ENCODE measurements at regions of chr14 and their contacts with region 1.

Region 1: DNA sequence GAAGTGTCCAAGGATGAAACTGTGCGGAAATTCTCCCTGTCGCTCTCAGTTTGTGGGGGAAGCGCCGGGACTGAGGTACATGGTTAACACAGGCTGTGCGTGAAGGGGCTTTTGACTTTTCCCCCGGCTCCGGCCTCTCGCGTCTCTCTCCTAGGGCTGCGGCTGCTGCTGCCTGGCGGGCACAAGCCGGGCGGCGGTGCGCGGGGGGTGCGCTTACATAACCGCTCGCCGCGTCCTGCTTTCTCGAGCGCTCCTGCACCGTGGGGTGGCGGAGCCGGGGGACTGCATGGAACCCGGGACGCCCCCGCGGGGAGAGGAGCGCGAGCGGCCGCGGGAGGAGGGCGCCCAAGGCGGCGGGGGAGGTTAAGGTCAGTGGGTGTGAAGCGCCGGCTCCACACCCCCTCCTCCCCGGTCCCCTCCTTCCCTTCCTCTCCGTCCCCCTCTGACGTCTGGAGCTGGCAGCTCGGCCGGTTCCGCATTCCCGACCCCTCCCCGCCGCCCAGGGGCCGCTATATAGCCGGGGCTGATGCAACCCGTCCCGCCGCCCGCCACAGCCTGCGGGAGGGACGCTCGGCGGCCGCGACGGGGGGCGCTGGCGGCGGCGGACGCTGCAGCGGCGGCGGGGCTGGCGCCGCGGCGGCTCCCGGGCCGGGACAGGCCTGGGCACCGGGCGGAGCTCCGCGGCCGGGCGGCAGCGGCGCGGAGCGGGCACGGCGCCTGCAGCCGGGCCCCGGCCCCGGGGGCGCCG is at the start of gene JDP2:
- DNase-seq: peak; percentile 87 to 92 (median 89)
- H3K4me3 ChIP-seq: peak within 1 kb of the TSS; percentile 80 to 97 (median 89)
- H3K4me3 Mint-ChIP-seq: peak within 1 kb of the TSS; percentile 88 to 93
- H3K27ac ChIP-seq: peak within 1 kb of the TSS; percentile 91 to 94
- H3K27ac Mint-ChIP-seq: peak within 1 kb of the TSS; percentile 94 to 98 (median 96)
- H3K4me1 ChIP-seq: peaks cover 51 to 52% of the 10 kb centered on the region in 2 donors
- H3K4me1 Mint-ChIP-seq: peaks cover 53% of the 10 kb centered on the region
- H3K27me3 ChIP-seq: no peaks in the 10 kb centered on the region
- H3K27me3 Mint-ChIP-seq: peaks cover 0 to 5% (median 2%) of the 10 kb centered on the region in 3 donors
- CTCF ChIP-seq: no peak
- polyA plus RNA-seq, gene JDP2: 3.5 to 69.2 (median 14.2) TPM

Region 2: DNA sequence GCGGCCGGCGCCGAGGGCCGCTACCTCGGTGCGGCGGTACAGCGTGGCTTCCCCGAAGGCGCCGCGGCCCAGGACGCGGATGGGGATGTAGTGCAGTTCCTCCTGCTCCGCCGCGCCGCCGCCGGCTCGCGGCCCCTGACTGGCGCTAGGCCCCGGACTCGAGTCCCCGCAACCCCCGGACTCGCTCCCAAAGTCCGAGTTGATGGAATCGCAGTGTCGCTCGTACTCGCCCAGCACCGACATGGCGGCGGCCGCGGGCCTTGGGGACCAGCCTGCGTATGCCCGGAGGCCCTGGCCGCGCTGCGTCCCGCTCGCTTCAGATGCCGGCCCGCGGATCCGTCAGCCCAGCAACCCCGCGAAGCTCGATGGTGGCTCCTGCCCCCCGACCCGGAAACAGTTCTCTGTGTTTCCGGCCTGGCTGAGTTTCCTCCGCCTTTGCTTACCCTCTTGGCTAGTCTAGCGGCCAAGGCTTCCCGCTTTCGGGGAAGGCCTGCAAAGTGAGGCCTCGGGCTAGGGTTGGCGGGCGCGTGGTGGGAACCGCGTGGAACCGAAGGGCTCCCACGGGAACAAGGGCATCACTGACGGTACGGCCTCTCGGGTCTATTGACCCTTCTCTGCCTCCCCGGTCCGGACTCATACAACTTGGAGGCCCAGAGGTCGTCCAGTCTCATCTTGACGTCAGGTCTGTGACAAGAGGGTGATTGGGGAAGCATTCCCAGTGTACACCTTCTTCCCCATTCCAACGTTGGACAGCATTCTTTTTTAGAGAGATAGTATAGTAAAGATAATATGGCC is 300.8 kb before region 1 on chr14 and contains the start of gene NEK9:
- intact Hi-C with region 1: loop called (anchors 5 to 10 kb)
- DNase-seq: peak; percentile 77 to 86 (median 85)
- H3K4me3 ChIP-seq: peak within 1 kb of the TSS; percentile 61 to 78 (median 62)
- H3K4me3 Mint-ChIP-seq: peak within 1 kb of the TSS; percentile 82 to 95
- H3K27ac ChIP-seq: peak within 1 kb of the TSS; percentile 91 to 97
- H3K27ac Mint-ChIP-seq: peak within 1 kb of the TSS; percentile 97 to 99 (median 98)
- H3K4me1 ChIP-seq: peaks cover 47 to 54% of the 10 kb centered on the region in 2 donors
- H3K4me1 Mint-ChIP-seq: peaks cover 49% of the 10 kb centered on the region
- H3K27me3 ChIP-seq: no peaks in the 10 kb centered on the region
- H3K27me3 Mint-ChIP-seq: peaks cover 0 to 1% (median 0%) of the 10 kb centered on the region in 3 donors
- CTCF ChIP-seq: no peak
- polyA plus RNA-seq, gene NEK9: 8.9 to 27.8 (median 10.1) TPM

Region 3: DNA sequence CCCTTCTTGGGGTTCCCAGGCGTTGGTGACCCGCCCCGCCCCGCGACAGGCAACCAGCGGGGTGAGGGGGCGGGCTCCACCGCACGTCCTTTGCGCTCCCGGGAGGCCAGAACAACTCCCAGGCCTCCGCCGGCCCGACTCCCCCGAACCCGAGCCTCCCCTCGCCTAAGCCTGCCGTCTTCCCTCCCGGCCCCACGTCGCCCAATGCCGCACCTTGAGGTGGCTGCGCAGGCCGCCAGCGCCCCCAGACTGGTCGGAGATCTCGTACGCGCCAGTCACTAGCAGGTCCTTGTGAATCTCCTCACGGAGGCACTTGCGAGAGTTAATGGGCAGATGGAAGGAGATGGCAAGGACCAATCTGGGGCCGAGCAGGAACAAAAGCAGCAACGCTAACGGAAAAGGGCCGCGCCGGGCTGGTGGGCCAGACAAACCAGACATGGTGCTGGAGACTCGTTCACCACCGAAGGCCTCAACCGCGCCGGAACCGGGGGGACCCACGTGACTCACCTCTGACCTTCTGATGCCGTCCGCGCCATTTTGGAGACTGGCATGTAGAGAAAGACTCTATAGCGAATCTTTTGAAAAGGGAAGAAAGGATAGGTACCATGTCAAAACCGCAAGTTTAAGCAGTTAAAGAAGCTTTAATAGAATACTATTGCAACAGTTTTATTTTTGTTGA is 251.4 kb before region 1 on chr14 and contains the start of gene TMED10:
- intact Hi-C with region 1: no loop called
- DNase-seq: peak; percentile 46 to 88 (median 87)
- H3K4me3 ChIP-seq: peak within 1 kb of the TSS; percentile 75 to 92 (median 78)
- H3K4me3 Mint-ChIP-seq: peak within 1 kb of the TSS; percentile 91 to 95
- H3K27ac ChIP-seq: peak within 1 kb of the TSS; percentile 95 to 97
- H3K27ac Mint-ChIP-seq: peak within 1 kb of the TSS; percentile 96 to 99 (median 99)
- H3K4me1 ChIP-seq: peaks cover 41 to 57% of the 10 kb centered on the region in 2 donors
- H3K4me1 Mint-ChIP-seq: peaks cover 45% of the 10 kb centered on the region
- H3K27me3 ChIP-seq: no peaks in the 10 kb centered on the region
- H3K27me3 Mint-ChIP-seq: peaks cover 0 to 3% (median 0%) of the 10 kb centered on the region in 3 donors
- CTCF ChIP-seq: no peak
- polyA plus RNA-seq, gene TMED10: 98.5 to 243 (median 233) TPM

Region 4: GRCh38 chr14:75307700-75308379 is 119.8 kb before region 1 on chr14:
- intact Hi-C with region 1: loop called (anchors 5 kb)
- DNase-seq: peak; percentile 68 to 79 (median 77)
- H3K4me3 ChIP-seq: no peak overlapping the region
- H3K4me3 Mint-ChIP-seq: no peak overlapping the region
- H3K27ac ChIP-seq: no peak overlapping the region
- H3K27ac Mint-ChIP-seq: peak overlapping the region in 4 of 7 donors; percentile 36 to 83 (median 73)
- H3K4me1 ChIP-seq: peaks cover 23 to 27% of the 10 kb centered on the region in 2 donors
- H3K4me1 Mint-ChIP-seq: peaks cover 41% of the 10 kb centered on the region
- H3K27me3 ChIP-seq: no peaks in the 10 kb centered on the region
- H3K27me3 Mint-ChIP-seq: no peaks in the 10 kb centered on the region
- CTCF ChIP-seq: peak; percentile 87

Region 5: DNA sequence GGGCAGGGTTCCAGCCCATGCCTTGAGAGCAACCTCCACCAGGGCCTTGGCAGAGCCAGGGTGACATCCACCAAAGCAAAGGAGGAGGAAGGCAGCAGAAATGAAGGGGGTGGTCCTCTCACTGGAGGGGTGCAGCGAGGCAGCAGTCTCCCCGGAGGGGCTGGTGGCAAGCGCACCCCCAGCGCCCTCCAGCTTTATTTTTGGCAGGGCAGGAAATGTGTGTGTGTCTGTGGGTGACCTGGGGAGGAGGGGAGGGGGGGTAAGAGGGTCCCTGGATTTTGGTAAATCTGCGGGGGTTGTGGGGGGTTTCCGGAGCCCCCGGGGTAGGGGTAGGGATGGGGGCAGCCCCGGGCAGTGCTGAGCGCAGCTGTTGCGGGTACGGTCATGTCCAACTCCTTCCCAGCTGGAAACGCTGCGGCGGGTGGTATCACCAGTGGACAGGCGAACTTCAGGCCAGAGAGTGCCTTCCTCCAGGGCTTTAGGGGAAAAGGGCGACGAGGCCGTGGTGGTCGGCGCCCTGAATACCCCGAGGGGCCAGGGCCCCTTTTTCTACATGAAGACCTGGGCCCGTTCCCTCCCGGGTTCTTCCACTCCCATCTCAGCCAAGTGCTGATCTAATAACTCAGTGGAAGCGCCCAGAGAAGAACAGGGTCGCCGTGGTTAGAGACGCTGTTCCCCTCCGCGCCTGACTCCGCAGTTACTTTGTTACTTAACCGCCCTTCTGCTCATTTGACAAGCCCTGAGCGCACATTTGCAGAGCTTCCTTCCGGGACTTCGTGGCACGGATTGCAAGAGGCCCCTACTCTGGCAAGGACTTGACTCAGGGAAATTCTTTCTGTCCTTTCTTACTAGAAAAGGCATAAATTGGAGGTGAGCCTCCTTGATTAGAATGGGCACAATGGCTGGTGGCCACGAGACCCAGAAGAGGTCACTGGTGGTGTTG is 93.8 kb before region 1 on chr14:
- intact Hi-C with region 1: loop called in 1 of 2 experiments (anchors 5 kb)
- DNase-seq: peak; percentile 81 to 85 (median 83)
- H3K4me3 ChIP-seq: peak overlapping the region; percentile 44 to 71 (median 48)
- H3K4me3 Mint-ChIP-seq: peak overlapping the region; percentile 86 to 94
- H3K27ac ChIP-seq: peak overlapping the region; percentile 98 to 99
- H3K27ac Mint-ChIP-seq: peak overlapping the region; percentile 96 to 99 (median 98)
- H3K4me1 ChIP-seq: peaks cover 79 to 84% of the 10 kb centered on the region in 2 donors
- H3K4me1 Mint-ChIP-seq: peaks cover 75% of the 10 kb centered on the region
- H3K27me3 ChIP-seq: no peaks in the 10 kb centered on the region
- H3K27me3 Mint-ChIP-seq: peaks cover 0 to 3% (median 2%) of the 10 kb centered on the region in 3 donors
- CTCF ChIP-seq: no peak

Region 6: DNA sequence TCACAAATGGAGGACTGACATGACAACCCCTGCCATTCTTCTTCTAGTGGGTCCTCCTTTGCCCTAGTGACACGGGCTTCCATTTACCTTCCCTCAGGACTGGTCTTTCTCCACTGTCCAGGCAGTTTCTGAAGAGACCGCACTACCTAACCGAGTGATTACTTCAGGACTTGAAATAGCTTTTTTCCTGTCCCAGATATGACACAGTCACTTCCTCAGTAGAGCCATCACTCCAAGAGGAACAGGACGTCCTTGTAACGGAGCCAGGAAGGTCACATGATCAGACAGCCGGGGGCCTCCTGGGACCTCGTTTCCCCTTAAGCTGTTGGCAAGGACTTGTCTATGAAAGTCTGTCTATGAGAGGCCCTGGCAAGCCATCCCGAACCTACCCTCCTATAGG is 86.7 kb before region 1 on chr14:
- intact Hi-C with region 1: loop called in 1 of 2 experiments (anchors 5 kb)
- DNase-seq: peak; percentile 53 to 89 (median 87)
- H3K4me3 ChIP-seq: peak overlapping the region in 2 of 3 experiments; percentile 7 to 62
- H3K4me3 Mint-ChIP-seq: peak overlapping the region; percentile 39 to 78
- H3K27ac ChIP-seq: peak overlapping the region; percentile 65 to 88
- H3K27ac Mint-ChIP-seq: peak overlapping the region; percentile 89 to 98 (median 96)
- H3K4me1 ChIP-seq: peaks cover 83 to 88% of the 10 kb centered on the region in 2 donors
- H3K4me1 Mint-ChIP-seq: peaks cover 79% of the 10 kb centered on the region
- H3K27me3 ChIP-seq: no peaks in the 10 kb centered on the region
- H3K27me3 Mint-ChIP-seq: peaks cover 0 to 3% (median 0%) of the 10 kb centered on the region in 3 donors
- CTCF ChIP-seq: no peak

Region 7: DNA sequence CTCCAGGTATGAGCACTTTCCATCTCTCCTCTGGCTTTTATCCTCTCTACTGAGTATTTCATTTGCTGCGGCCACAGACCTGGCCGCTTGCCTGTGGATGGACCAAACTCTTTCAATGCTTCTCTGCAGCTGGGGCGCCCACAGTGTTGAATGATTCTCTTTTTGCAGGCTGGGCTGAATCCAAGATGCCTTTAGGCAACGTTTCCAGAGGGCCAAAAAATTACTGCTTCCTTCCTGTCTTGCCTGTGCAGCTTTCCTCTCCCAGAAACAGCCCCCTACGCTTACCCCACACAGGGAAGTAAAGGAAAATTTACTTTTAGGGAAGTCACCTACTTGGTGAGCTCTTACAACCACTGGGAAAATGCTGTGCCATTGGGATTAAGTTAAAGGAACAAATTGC is 55.4 kb before region 1 on chr14:
- intact Hi-C with region 1: loop called in 1 of 2 experiments (anchors 5 kb)
- DNase-seq: no peak
- H3K4me3 ChIP-seq: no peak overlapping the region
- H3K4me3 Mint-ChIP-seq: no peak overlapping the region
- H3K27ac ChIP-seq: no peak overlapping the region
- H3K27ac Mint-ChIP-seq: peak overlapping the region in 1 of 7 donors; percentile 58
- H3K4me1 ChIP-seq: peaks cover 23 to 29% of the 10 kb centered on the region in 2 donors
- H3K4me1 Mint-ChIP-seq: peaks cover 28% of the 10 kb centered on the region
- H3K27me3 ChIP-seq: no peaks in the 10 kb centered on the region
- H3K27me3 Mint-ChIP-seq: peaks cover 0 to 7% (median 3%) of the 10 kb centered on the region in 3 donors
- CTCF ChIP-seq: no peak